IMR-90 (cell line): ENCODE measurements at regions of chr16 and their contacts with region 1.

Region 1: DNA sequence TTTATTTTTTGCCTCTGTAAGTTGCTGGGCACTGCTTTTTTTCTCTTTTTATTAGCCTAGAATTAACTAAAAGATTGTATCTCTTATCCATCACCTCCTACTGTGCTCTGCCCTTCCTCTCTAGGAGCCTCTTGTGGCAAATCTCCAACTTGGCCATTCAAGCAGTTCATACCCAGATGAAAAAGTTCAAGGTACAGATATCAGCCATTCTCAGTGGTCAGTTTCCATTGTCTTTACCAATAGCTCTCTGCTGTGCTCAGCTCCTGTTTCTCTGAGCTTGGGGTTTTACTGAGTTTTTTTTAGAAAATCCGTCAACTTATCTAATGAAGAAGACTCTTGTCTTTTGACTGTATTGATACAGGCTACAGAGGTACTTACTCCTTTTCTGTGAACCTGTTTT is 15.6 kb downstream of the MOSMO start:
- DNase-seq: no peak
- ATAC-seq: no peak
- H3K4me3 ChIP-seq: no peak overlapping the region
- H3K27ac ChIP-seq: no peak overlapping the region
- H3K4me1 ChIP-seq: peaks cover 11% of the 10 kb centered on the region
- H3K27me3 ChIP-seq: no peaks in the 10 kb centered on the region
- CTCF ChIP-seq: no peak
- POLR2A ChIP-seq: no peak
- RAD21 ChIP-seq: no peak

Region 2: DNA sequence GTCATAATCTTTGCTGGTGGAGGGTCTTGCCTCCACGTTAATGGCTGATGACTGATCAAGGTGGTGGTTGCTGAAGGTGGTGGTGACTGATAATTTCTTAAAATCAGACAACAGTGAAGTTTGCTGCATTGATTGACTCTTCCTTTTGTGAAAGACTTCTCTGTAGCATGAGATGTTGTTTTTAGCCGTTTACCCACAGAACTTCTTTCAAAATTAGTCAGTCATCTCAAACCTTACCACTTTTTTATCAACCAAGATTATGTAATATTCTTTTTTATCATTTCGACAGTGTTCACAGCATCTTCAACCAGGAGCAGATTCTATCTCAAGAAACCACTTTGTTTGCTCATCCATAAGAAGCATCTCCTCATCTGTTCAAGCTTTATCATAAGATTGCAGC is 64.5 kb before region 1 on chr16:
- CTCF ChIA-PET with region 1: no interaction called
- POLR2A ChIA-PET with region 1: no interaction called
- dilution Hi-C with region 1: no loop called
- in situ Hi-C with region 1: no loop called
- intact Hi-C with region 1: no loop called
- DNase-seq: no peak
- ATAC-seq: no peak
- H3K4me3 ChIP-seq: no peak overlapping the region
- H3K27ac ChIP-seq: no peak overlapping the region
- H3K4me1 ChIP-seq: peaks cover 2% of the 10 kb centered on the region
- H3K27me3 ChIP-seq: no peaks in the 10 kb centered on the region
- CTCF ChIP-seq: no peak
- POLR2A ChIP-seq: no peak
- RAD21 ChIP-seq: no peak

Region 3: GRCh38 chr16:22007509-22008214 is 15.8 kb before region 1 on chr16 and contains the start of gene MOSMO:
- CTCF ChIA-PET with region 1: interaction called, 5 read pairs
- POLR2A ChIA-PET with region 1: no interaction called
- dilution Hi-C with region 1: no loop called
- in situ Hi-C with region 1: no loop called
- intact Hi-C with region 1: loop called (anchors 2 kb)
- DNase-seq: peak; percentile 63
- ATAC-seq: peak; percentile 92
- H3K4me3 ChIP-seq: peak within 1 kb of the TSS; percentile 92
- H3K27ac ChIP-seq: peak within 1 kb of the TSS; percentile 93
- H3K4me1 ChIP-seq: peaks cover 8% of the 10 kb centered on the region
- H3K27me3 ChIP-seq: no peaks in the 10 kb centered on the region
- CTCF ChIP-seq: 0 out of 2 replicates have a peak, but pooled peaks have one; percentile 8
- POLR2A ChIP-seq: peak; percentile 50; the same call in 1 of the 2 replicates
- RAD21 ChIP-seq: no peak
- total RNA-seq, gene MOSMO: 16.0 and 16.9 TPM in 2 replicates

Region 4: DNA sequence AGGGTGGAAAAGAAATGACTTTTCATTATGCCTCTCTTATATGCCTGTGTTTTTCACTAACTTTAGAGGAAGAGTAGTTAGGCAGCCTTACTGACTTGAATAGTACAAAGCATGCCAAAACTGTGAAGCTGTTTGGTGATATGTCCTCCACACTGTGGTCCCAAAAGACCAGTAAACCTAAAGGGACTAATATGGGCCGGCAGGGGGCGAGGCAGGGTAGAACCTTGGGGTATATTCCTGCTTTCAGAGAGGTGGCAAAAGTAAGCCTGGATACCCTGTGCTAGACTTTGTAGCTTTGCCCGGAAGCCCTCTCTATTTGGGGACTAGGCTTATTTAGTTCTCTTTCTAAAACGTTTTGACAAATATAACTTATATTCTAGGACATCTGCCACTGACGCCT is 32.4 kb after region 1 on chr16:
- CTCF ChIA-PET with region 1: no interaction called
- POLR2A ChIA-PET with region 1: no interaction called
- dilution Hi-C with region 1: no loop called
- in situ Hi-C with region 1: no loop called
- intact Hi-C with region 1: loop called (anchors 5 kb)
- DNase-seq: no peak
- ATAC-seq: no peak
- H3K4me3 ChIP-seq: no peak overlapping the region
- H3K27ac ChIP-seq: no peak overlapping the region
- H3K4me1 ChIP-seq: no peaks in the 10 kb centered on the region
- H3K27me3 ChIP-seq: no peaks in the 10 kb centered on the region
- CTCF ChIP-seq: no peak
- POLR2A ChIP-seq: no peak
- RAD21 ChIP-seq: no peak